Psoas muscle (tissue), 8 donors: ENCODE measurements at regions of chr1 and their contacts with region 1.

Region 1: GRCh38 chr1:25103164-25103795 is 129.0 kb downstream of the SYF2 start:
- DNase-seq: no peak
- ATAC-seq: no peak
- H3K4me3 ChIP-seq: no peak overlapping the region
- H3K27ac ChIP-seq: no peak overlapping the region
- H3K4me1 ChIP-seq: no peaks in the 10 kb centered on the region
- H3K27me3 ChIP-seq: peaks cover 0 to 17% (median 3%) of the 10 kb centered on the region in 3 donors
- CTCF ChIP-seq: no peak

Region 2: DNA sequence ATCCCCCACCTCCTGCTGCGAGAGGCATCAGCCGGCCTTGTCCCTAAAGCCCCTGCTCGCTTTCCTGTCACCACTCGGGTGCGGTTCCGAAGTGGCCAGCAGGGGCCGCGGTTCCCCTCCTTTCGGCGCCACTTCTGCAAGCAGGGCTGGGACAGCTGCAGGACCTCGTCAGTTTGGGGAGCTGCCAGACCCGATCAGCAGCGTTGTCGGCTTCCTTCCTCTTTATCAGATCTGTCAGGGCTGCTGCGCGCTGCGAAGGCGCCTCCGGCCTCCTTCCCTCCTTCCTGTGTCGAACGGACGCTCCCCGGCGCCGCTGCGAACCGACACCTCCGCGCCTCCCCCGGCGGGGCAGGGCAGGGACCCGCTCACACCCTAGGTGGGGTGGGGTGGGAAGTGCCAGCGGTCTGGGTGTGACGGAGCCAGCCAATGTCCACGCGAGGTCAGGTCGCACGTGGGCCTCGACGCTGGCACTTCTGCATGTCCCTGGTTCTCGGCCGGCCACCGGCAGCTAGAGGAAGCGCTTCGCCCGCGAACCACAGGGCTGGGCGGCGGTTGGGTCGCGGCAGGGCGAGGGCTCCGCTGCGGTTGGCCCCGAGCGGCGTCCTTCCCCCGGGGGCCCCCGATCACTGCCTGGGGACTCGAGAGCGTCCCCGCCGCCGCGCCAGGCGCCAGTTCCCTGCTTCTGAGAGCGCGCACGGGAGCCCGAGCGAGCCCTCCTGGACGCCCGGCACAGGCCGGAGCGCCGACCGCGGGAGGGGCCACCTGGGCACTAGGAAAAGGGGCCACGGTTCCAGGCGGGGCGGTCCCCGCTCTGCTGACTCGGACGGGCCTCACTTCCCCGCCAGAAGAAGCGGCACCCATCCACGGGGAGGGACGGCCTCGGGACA is 255.0 kb before region 1 on chr1:
- intact Hi-C with region 1: loop called (anchors 2 to 5 kb)
- DNase-seq: peak; percentile 92 to 95
- ATAC-seq: peak; percentile 95 to 99 (median 96)
- H3K4me3 ChIP-seq: peak overlapping the region; percentile 68
- H3K27ac ChIP-seq: peak overlapping the region; percentile 49
- H3K4me1 ChIP-seq: peaks cover 5% of the 10 kb centered on the region
- H3K27me3 ChIP-seq: peaks cover 0 to 3% (median 0%) of the 10 kb centered on the region in 3 donors
- CTCF ChIP-seq: peak; percentile 93

Region 3: GRCh38 chr1:24932284-24932683 is 171.0 kb before region 1 on chr1:
- intact Hi-C with region 1: loop called in 1 of 2 experiments (anchors 2 kb)
- DNase-seq: peak in 1 of 2 donors; percentile 50
- ATAC-seq: peak; percentile 57 to 81 (median 72)
- H3K4me3 ChIP-seq: peak overlapping the region; percentile 35
- H3K27ac ChIP-seq: no peak overlapping the region
- H3K4me1 ChIP-seq: peaks cover 10% of the 10 kb centered on the region
- H3K27me3 ChIP-seq: peaks cover 4 to 76% (median 42%) of the 10 kb centered on the region in 3 donors
- CTCF ChIP-seq: peak; percentile 77

Region 4: GRCh38 chr1:25037174-25038074 is 65.9 kb before region 1 on chr1:
- intact Hi-C with region 1: loop called in 1 of 2 experiments (anchors 2 kb)
- DNase-seq: peak in 1 of 2 donors; percentile 41
- ATAC-seq: peak; percentile 55 to 70 (median 66)
- H3K4me3 ChIP-seq: no peak overlapping the region
- H3K27ac ChIP-seq: no peak overlapping the region
- H3K4me1 ChIP-seq: no peaks in the 10 kb centered on the region
- H3K27me3 ChIP-seq: peaks cover 0 to 2% (median 0%) of the 10 kb centered on the region in 3 donors
- CTCF ChIP-seq: peak; percentile 49

Region 5: DNA sequence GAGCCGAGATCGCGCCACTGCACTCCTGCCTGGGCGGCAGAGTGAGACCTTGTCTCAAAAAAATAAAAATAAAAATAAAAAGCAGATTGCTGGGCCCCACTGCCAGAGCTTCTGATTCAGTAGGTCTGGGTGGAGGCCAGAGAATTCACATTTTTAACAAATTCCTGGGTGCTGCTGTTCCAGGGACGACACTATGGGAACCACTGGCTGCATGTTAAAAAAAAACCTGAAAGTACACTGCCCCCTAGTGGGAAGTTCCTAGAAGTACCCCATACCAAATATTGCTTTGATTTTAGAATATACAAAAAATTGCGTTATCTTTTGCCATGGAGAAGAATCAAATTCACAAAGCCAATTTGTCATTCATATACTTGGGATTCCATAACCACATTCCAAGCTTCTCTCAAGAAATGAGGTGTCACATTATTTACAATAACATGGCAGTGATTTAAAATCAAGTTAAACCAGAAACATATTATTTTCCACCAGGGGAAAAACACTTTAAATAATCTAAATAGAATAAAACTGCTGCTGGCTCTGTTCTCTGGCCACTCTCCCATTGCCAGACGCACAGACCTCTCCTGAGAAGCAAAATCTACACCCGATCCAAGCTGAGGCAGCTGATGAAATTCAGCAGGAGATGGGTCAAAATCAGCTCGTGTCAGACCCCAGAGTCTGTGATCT is 101.7 kb after region 1 on chr1:
- intact Hi-C with region 1: loop called in 1 of 2 experiments (anchors 10 kb)
- DNase-seq: no peak
- ATAC-seq: peak in 3 of 4 donors; percentile 52 to 75 (median 55)
- H3K4me3 ChIP-seq: no peak overlapping the region
- H3K27ac ChIP-seq: no peak overlapping the region
- H3K4me1 ChIP-seq: peaks cover 4% of the 10 kb centered on the region
- H3K27me3 ChIP-seq: peaks cover 0 to 2% (median 0%) of the 10 kb centered on the region in 3 donors
- CTCF ChIP-seq: peak; percentile 78